Right lobe of liver (tissue), 6 donors: ENCODE measurements at regions of chr11 and their contacts with region 1.

Region 1: DNA sequence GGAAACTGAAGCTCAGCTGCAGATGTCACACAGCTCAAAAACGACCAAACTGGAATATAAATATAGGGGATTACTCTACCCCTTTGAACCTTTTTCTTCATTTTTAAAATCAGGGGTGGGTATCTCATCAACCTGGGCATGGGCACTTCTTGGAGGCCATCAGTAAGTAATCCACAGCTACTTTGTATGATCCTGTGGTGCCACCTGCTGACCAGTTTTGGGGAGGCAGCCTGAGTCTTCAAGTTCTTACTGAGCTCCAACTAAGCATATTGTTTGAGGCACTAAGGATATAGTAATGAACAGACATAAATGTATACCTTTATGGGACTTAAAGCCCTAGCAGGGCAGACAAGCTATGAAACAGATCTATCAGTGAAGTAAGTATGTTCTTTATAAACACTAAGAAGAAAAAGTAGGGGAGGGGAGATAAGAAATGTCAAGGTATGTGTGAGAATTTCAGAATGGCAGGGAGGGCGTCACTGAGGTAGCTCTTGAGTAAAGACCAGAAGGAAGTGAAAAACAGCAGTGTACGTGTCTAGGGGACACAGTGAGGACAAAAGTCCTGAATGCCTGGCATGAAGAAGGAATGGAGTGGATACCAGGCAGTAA is 18.4 kb downstream of the TUB start:
- DNase-seq: peak in 2 of 3 donors; percentile 66 to 77
- ATAC-seq: peak; percentile 80 to 94 (median 86)
- H3K4me3 ChIP-seq: no peak overlapping the region
- H3K27ac ChIP-seq: no peak overlapping the region
- H3K4me1 ChIP-seq: no peaks in the 10 kb centered on the region
- H3K27me3 ChIP-seq: no peaks in the 10 kb centered on the region
- CTCF ChIP-seq: peak; percentile 85 to 94 (median 85)
- POLR2A ChIP-seq: no peak

Region 2: DNA sequence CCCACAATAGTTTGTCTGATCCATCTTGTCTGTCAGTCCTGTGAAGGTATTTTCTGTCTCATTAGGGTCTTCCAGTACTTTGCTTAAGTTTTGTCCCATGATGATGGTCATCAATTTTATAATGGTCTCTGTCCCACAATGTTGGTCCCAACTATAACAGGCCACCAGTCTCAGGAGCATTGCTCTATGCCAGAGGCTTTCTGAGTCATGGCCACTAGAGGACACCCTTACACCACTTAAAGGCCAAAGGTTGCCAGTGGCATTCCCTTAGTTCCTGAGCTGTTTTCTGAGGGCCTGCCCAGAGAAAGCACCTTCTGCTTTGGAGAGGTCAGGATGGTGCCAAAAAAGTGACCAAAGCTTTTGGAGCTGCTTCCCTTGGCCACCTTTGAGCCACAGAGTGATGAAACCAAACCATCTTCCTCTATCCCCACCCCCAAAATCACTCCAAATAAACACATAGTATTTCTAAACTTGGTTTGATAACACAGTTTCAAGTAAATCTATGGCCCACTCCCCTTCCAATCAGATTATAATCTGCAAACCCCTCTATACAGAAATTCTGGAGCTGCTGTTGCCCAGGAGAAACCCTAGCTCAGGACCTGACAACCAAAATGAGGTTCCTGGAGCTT is 92.9 kb before region 1 on chr11:
- intact Hi-C with region 1: loop called (anchors 5 kb)
- DNase-seq: peak in 1 of 3 donors; percentile 67
- ATAC-seq: peak; percentile 94 to 99 (median 96)
- H3K4me3 ChIP-seq: no peak overlapping the region
- H3K27ac ChIP-seq: no peak overlapping the region
- H3K4me1 ChIP-seq: peaks cover 0 to 3% (median 0%) of the 10 kb centered on the region in 4 donors
- H3K27me3 ChIP-seq: no peaks in the 10 kb centered on the region
- CTCF ChIP-seq: peak; percentile 82 to 93 (median 88)
- POLR2A ChIP-seq: no peak